Endothelial cell of umbilical vein (primary cell): ENCODE measurements at regions of chr15 and their contacts with region 1.

Region 1: GRCh38 chr15:60635507-60636352 is 156.8 kb upstream of the ICE2 start:
- DNase-seq: peak; percentile 69
- H3K4me3 ChIP-seq: peak overlapping the region in 1 of 3 experiments; percentile 10
- H3K27ac ChIP-seq: peak overlapping the region; percentile 93
- H3K4me1 ChIP-seq: peaks cover 17% of the 10 kb centered on the region
- H3K27me3 ChIP-seq: no peaks in the 10 kb centered on the region
- CTCF ChIP-seq: no peak
- POLR2A ChIP-seq: no peak

Region 2: GRCh38 chr15:60708684-60709083 is 73.0 kb after region 1 on chr15:
- CTCF ChIA-PET with region 1: no interaction called
- POLR2A ChIA-PET with region 1: no interaction called
- dilution Hi-C with region 1: no loop called
- intact Hi-C with region 1: loop called (anchors 5 kb)
- DNase-seq: peak; percentile 89
- H3K4me3 ChIP-seq: no peak overlapping the region
- H3K27ac ChIP-seq: peak overlapping the region; percentile 46
- H3K4me1 ChIP-seq: peaks cover 24% of the 10 kb centered on the region
- H3K27me3 ChIP-seq: no peaks in the 10 kb centered on the region
- CTCF ChIP-seq: no peak
- POLR2A ChIP-seq: no peak